Activated CD8-positive, alpha-beta T cell treated with anti-CD3 and anti-CD28 coated beads for 36 hours (primary cell): ENCODE measurements at regions of chr6 and their contacts with region 1.

Region 1: DNA sequence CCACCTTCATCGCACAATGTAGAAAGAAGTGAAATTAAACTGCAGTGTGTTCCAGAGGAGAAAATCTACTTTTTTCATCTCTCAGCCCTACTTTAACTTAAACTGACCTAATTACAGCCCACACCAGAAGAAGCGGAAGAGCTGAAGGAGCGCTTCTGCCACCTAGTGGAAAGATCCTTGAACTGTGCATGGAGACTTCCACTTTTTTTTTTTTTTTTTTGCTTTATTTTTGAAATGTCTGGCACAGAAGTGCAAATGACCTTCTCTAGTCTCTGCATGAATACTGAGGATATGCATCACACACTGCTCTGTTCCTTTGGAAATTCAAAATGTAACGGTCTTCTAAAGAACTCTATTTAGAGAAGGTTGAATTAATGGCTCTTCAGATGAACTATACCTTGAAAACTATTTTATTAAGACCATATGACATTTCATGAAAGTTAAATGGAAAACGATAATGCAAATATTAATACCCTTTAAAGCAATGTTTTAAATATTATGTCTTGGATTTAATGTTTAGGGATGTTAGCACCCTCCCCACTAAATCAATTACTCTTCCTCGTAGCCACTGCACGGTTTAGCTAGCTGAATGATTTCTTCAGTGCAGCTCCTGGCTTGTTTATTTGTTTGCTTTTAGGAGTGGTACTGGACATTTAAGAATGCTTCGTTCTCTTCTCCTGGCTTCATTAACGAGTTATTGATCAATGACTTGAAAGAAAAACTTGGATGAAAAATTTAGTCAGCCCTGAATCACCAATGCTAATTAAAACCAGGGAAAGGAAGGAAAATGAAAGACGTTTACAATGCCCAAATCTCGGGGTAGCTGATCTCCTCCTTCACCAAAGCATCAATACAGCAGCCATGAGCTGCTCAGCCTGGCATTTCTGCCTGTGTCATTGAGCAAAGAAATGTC is 569.6 kb upstream of the GJE1 start:
- DNase-seq: peak; percentile 64
- ATAC-seq: peak; percentile 91
- H3K4me3 Mint-ChIP-seq: peak overlapping the region; percentile 61
- H3K27ac Mint-ChIP-seq: peak overlapping the region; percentile 91
- H3K4me1 Mint-ChIP-seq: peaks cover 18% of the 10 kb centered on the region
- H3K27me3 Mint-ChIP-seq: peaks cover 2% of the 10 kb centered on the region
- CTCF ChIP-seq: peak; percentile 93

Region 2: DNA sequence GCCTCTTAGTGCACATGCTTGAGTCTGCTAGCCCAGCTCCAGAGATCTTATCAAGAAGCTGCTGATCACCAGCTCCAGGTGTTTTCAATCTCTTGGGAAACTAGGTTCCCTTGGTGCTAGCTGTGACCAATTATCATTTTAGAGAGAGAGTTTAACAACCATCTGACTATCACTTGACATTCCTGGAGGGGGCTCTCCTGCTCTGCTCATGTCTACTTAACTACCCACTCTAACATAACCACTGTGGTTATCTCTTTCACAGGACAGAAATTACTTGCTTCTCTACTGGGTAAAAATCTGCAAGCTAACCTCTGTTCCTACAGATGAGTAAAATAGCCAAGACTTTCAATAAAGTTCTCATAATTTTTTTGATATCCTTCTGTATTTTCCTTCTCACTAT is 253.8 kb before region 1 on chr6:
- CTCF ChIA-PET with region 1: interaction called, 4 read pairs
- POLR2A ChIA-PET with region 1: no interaction called
- intact Hi-C with region 1: loop called (anchors 5 kb)
- DNase-seq: no peak
- ATAC-seq: peak; percentile 65
- H3K4me3 Mint-ChIP-seq: no peak overlapping the region
- H3K27ac Mint-ChIP-seq: no peak overlapping the region
- H3K4me1 Mint-ChIP-seq: peaks cover 12% of the 10 kb centered on the region
- H3K27me3 Mint-ChIP-seq: no peaks in the 10 kb centered on the region
- CTCF ChIP-seq: no peak

Region 3: GRCh38 chr6:141824258-141824790 is 261.2 kb after region 1 on chr6:
- CTCF ChIA-PET with region 1: no interaction called
- POLR2A ChIA-PET with region 1: no interaction called
- intact Hi-C with region 1: no loop called
- DNase-seq: no peak
- ATAC-seq: no peak
- H3K4me3 Mint-ChIP-seq: no peak overlapping the region
- H3K27ac Mint-ChIP-seq: no peak overlapping the region
- H3K4me1 Mint-ChIP-seq: no peaks in the 10 kb centered on the region
- H3K27me3 Mint-ChIP-seq: no peaks in the 10 kb centered on the region
- CTCF ChIP-seq: no peak